Mammary epithelial cell (primary cell): ENCODE measurements at regions of chr1 and their contacts with region 1.

Region 1: DNA sequence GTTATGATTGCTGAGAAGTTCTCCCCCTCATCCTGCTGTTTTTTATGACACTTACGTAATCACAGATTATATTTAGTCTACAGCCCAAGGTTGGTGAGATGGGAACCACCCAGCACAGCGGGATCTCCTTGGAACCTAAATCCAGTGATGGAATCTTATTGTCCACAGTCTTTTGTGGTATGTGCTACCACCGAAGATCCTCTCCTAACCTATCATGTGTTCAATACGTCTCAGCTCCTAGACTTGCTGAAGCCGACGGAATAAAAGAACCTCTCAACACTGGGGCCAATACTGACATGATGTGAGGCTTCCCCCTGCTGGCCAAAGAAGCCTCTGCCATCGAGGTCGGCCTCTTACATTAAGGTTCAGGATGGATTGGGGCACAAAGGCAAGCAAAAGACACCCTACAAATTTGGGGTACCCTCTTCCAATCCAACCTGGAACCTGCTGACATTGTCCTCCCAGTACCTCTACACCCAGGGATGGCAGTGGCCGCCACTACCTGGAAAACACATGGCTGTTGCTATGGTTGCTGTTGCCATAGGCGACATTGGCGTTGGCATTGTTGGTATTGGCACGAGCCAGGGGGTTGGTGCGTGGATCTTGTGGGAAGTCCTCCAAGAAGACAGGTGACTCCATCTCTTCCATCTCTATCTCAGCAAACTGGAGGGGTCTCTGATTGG is 19.4 kb upstream of the KIF21B start:
- DNase-seq: peak; percentile 41
- H3K4me3 ChIP-seq: no peak overlapping the region
- H3K27ac ChIP-seq: no peak overlapping the region
- H3K4me1 ChIP-seq: no peaks in the 10 kb centered on the region
- H3K27me3 ChIP-seq: no peaks in the 10 kb centered on the region
- CTCF ChIP-seq: peak; percentile 90 to 92

Region 2: DNA sequence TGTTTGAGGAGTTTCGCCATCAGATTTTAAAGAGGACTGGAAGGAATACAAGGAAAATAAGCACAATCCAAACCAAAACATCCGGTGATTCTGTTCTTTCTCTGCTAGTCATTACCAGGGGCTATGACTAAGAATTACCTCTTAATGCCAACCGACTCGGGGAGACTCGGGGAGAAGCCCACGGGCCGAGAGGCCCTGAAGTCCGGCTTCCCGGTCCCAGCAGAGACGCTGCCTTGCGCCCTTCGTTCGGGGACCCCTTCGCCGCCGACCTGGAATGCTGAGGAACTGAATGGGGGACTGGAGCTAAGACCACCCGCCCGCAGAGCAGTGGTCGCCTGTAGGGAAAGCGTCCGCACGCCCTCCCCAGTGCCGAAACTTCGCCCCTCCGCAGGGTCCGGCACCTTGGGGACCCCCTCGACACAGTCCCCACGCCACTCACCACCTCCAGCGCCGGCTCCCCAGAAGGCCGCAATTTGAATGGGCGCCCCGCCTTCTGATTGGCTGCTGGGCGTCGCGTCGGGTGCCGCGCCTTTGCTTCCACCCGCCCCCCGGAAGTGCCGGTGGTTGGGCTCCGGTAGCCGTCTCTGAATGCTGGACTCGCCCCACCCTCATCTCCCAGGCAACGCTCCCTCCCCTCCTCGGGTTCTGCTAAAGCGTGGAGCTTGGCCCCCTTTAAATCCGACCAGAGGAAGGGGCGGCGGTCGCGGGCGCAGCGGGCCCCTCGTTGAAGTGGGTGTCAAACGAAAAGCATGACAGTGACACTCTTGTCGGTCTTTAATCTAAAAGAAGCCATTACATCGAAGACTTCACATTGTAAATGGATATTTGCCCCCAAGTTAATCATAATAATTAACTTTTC is 422.4 kb before region 1 on chr1 and contains the start of gene KIF14:
- CTCF ChIA-PET with region 1: no interaction called
- dilution Hi-C with region 1: no loop called
- in situ Hi-C with region 1: no loop called
- intact Hi-C with region 1: loop called (anchors 1 kb)
- DNase-seq: peak; percentile 87
- H3K4me3 ChIP-seq: peak within 1 kb of the TSS; percentile 81 to 98 (median 93)
- H3K27ac ChIP-seq: peak within 1 kb of the TSS; percentile 97
- H3K4me1 ChIP-seq: peaks cover 17% of the 10 kb centered on the region
- H3K27me3 ChIP-seq: no peaks in the 10 kb centered on the region
- CTCF ChIP-seq: no peak
- total RNA-seq, gene KIF14: 0.67 to 11.7 TPM

Region 3: DNA sequence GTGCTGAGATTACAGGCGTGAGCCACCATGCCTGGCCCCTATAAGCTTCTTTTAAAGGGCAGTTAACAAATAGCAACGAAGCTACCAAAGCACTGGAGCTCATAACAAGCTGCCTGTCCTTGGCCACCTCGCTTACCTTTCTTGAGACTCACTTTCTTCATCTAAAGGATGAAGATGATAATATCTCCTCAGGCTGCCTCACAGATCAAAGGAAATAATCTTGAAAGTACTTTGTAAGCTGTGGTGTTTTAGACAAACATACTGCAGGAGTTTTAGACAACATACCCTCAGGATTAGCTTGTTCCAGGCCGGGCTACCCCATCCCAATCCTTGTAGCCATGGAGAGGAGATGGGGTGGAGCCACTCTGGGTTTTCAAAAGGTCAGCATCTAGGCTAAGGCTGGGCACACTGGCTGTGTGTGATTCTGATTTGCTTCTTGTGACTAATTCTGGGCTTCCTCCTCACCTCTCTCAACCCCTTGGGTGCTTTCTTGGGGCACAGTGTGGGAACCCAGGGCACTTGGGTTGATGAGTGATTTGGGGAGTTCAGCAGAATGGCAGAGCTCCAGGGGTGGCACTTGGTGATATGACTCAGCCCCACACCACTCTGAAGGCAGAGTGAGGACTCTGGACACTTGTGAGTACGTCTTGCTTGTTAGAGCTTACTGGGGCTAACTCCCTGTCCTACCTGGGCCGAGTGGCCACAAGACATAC is 164.9 kb before region 1 on chr1:
- CTCF ChIA-PET with region 1: no interaction called
- dilution Hi-C with region 1: loop called (anchors 5 kb)
- in situ Hi-C with region 1: no loop called
- intact Hi-C with region 1: no loop called
- DNase-seq: peak; percentile 25
- H3K4me3 ChIP-seq: no peak overlapping the region
- H3K27ac ChIP-seq: no peak overlapping the region
- H3K4me1 ChIP-seq: peaks cover 6% of the 10 kb centered on the region
- H3K27me3 ChIP-seq: peaks cover 14% of the 10 kb centered on the region
- CTCF ChIP-seq: no peak

Region 4: DNA sequence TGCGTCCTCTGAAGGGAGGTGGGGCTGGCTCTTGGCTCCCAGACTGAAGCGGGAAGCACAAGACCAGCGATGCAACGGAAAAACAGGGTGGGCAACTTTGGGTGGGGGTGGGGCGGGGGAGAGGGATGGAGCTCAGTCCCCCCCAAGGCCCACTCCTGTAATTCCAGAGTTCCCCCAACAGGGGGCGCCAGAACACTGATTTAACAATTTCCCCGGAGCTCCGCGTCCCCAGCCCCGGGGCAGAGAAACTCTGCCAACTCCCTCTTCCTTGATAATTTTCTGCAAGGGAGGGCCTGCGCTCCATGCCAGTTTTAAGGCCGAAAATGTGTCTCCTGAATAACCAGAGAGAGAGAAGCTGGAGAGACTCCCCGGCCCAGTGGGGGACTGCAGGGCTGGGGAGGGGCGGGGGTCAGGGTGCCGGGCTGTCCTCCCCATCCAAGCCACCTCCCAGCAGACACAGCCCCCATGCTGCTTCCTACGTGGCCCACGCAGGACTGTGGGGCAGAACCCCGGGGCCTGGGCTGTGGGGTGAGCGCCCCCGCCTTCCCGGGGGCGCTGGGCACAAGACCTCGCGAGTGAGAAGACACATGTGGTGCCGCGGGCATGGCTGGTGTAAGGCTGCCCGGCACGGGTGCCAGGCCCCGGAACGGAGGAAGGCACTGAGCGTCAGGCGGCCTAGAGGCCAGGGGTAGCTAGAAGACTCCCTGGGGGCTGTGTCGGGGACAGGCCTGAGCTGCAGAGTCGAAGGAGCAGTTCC is 70.8 kb before region 1 on chr1:
- CTCF ChIA-PET with region 1: no interaction called
- dilution Hi-C with region 1: loop called (anchors 10 kb)
- in situ Hi-C with region 1: loop called in 1 of 2 experiments (anchors 5 kb)
- intact Hi-C with region 1: loop called (anchors 1 kb)
- DNase-seq: peak; percentile 6
- H3K4me3 ChIP-seq: no peak overlapping the region
- H3K27ac ChIP-seq: no peak overlapping the region
- H3K4me1 ChIP-seq: no peaks in the 10 kb centered on the region
- H3K27me3 ChIP-seq: no peaks in the 10 kb centered on the region
- CTCF ChIP-seq: peak; percentile 37 to 70

Region 5: GRCh38 chr1:201009962-201010645 is 32.8 kb before region 1 on chr1:
- CTCF ChIA-PET with region 1: interaction called, 3 read pairs
- dilution Hi-C with region 1: loop called (anchors 5 kb)
- in situ Hi-C with region 1: no loop called
- intact Hi-C with region 1: no loop called
- DNase-seq: no peak
- H3K4me3 ChIP-seq: no peak overlapping the region
- H3K27ac ChIP-seq: no peak overlapping the region
- H3K4me1 ChIP-seq: no peaks in the 10 kb centered on the region
- H3K27me3 ChIP-seq: no peaks in the 10 kb centered on the region
- CTCF ChIP-seq: no peak

Region 6: GRCh38 chr1:201385299-201385891 is 342.5 kb after region 1 on chr1:
- CTCF ChIA-PET with region 1: interaction called, 10 read pairs
- dilution Hi-C with region 1: no loop called
- in situ Hi-C with region 1: no loop called
- intact Hi-C with region 1: no loop called
- DNase-seq: peak; percentile 54
- H3K4me3 ChIP-seq: no peak overlapping the region
- H3K27ac ChIP-seq: no peak overlapping the region
- H3K4me1 ChIP-seq: no peaks in the 10 kb centered on the region
- H3K27me3 ChIP-seq: no peaks in the 10 kb centered on the region
- CTCF ChIP-seq: peak; percentile 90 to 95